ENCODE measurements at regions of chr21 and their contacts with region 1.

Region 1: GRCh38 chr21:25507522-25507921 is 99.8 kb downstream of the MRPL39 start:
- DNase-seq: no peak
- H3K4me3 ChIP-seq: no peak overlapping the region
- H3K27ac ChIP-seq: no peak overlapping the region
- H3K4me1 ChIP-seq: no peaks in the 10 kb centered on the region
- H3K27me3 ChIP-seq: no peaks in the 10 kb centered on the region
- CTCF ChIP-seq: peak in 1 of 3 experiments; percentile 46; a peak in 1 of 4 replicates
- EP300 ChIP-seq: no peak
- POLR2A ChIP-seq: no peak
- RAD21 ChIP-seq: peak in 1 of 2 experiments; percentile 11; a peak in 2 of 4 replicates

Region 2: DNA sequence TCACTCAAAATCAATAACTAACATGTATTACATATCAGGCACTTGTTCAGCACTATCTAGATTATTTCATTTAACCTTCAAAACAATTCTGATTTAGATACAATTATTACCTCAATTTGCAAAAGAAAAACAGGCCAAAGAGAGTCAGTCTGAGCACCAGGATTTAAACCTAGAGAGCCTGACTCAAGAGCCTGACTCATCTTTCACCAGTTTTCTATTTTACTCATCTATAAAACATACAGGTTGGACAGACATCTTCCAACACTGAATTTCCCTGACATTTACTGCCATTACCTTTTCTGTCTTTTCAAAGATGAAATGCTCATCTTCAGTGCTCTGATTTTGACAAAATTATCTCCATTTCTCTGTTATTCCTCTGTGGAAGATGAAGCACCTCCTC is 16.8 kb before region 1 on chr21:
- CTCF ChIA-PET with region 1: interaction called, 10 read pairs
- POLR2A ChIA-PET with region 1: no interaction called
- DNase-seq: no peak
- H3K4me3 ChIP-seq: no peak overlapping the region
- H3K27ac ChIP-seq: no peak overlapping the region
- H3K4me1 ChIP-seq: no peaks in the 10 kb centered on the region
- H3K27me3 ChIP-seq: no peaks in the 10 kb centered on the region
- CTCF ChIP-seq: no peak
- EP300 ChIP-seq: no peak
- POLR2A ChIP-seq: no peak
- RAD21 ChIP-seq: no peak

Region 3: DNA sequence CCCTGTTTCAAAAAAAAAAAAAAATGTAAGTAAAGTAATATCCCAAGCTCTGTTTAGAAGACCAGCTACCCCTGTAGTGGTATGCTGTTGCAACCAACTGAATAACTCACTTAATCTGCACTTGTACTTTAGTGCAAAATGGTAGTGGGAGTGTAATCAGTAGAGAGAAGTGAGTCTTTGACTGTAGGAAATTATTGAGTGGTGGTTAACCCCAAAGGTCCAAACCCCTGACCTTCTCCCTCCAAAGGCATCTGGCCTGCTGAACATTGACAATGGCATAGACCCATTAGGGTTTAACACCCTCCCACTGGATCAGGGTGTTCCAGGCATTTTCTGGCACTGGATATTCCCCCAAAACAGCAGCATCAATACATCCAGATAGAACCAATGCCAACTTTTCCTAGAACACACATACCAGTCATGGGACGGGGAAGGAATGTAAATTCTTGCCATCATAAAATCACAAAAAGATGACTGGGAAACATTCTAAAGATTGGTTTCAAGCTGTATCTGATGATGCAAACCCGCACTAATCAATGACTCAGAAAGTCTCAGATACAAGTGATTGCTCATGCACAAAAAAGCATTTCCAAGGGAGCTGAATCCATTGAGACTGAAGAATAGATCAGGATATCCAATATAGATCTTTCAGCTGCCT is 10.6 kb before region 1 on chr21:
- CTCF ChIA-PET with region 1: interaction called, 10 read pairs
- POLR2A ChIA-PET with region 1: no interaction called
- DNase-seq: no peak
- H3K4me3 ChIP-seq: no peak overlapping the region
- H3K27ac ChIP-seq: no peak overlapping the region
- H3K4me1 ChIP-seq: no peaks in the 10 kb centered on the region
- H3K27me3 ChIP-seq: no peaks in the 10 kb centered on the region
- CTCF ChIP-seq: no peak
- EP300 ChIP-seq: no peak
- POLR2A ChIP-seq: no peak
- RAD21 ChIP-seq: no peak

Region 4: GRCh38 chr21:25528510-25528909 is 21.0 kb after region 1 on chr21:
- CTCF ChIA-PET with region 1: no interaction called
- POLR2A ChIA-PET with region 1: no interaction called
- DNase-seq: no peak
- H3K4me3 ChIP-seq: no peak overlapping the region
- H3K27ac ChIP-seq: no peak overlapping the region
- H3K4me1 ChIP-seq: no peaks in the 10 kb centered on the region
- H3K27me3 ChIP-seq: no peaks in the 10 kb centered on the region
- CTCF ChIP-seq: no peak
- EP300 ChIP-seq: no peak
- POLR2A ChIP-seq: no peak
- RAD21 ChIP-seq: no peak

Measured in H1 (cell line).